ENCODE measurements at regions of chr5 and their contacts with region 1.

Region 1: GRCh38 chr5:42423285-42424165 is at the start of gene GHR:
- DNase-seq: peak; percentile 84 to 93 (median 92)
- ATAC-seq: peak; percentile 96 to 97
- H3K4me3 ChIP-seq: peak within 1 kb of the TSS; percentile 91
- H3K27ac ChIP-seq: peak within 1 kb of the TSS; percentile 69
- H3K4me1 ChIP-seq: no peaks in the 10 kb centered on the region
- H3K27me3 ChIP-seq: no peaks in the 10 kb centered on the region
- total RNA-seq, gene GHR: 14.0 to 21.8 (median 18.0) TPM

Region 2: DNA sequence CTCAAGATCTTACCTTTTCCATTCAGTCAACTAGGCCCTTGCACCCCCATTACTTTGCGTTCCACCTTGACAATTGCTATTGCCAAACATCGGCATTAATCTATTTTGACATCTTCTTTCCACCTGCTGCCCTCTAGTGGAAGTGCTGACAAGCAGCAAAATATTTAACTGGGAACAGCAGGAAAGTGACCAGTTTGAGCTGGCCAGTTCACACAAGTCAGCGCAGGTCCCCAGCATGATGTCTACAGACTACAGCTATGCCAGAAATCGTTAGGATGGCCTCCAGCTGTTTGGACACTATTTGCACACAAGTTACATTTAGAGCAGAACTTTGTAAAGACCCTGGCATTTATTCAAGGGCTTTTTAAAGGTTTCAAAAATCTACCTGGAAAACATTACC is 159.8 kb after region 1 on chr5:
- intact Hi-C with region 1: loop called in 3 of 4 experiments (anchors 5 to 10 kb)
- DNase-seq: peak; percentile 54 to 68 (median 55)
- ATAC-seq: peak; percentile 57 to 61
- H3K4me3 ChIP-seq: no peak overlapping the region
- H3K27ac ChIP-seq: no peak overlapping the region
- H3K4me1 ChIP-seq: peaks cover 3% of the 10 kb centered on the region
- H3K27me3 ChIP-seq: no peaks in the 10 kb centered on the region

Region 3: GRCh38 chr5:42656651-42657015 is 233.1 kb after region 1 on chr5:
- intact Hi-C with region 1: loop called in 1 of 4 experiments (anchors 10 kb)
- DNase-seq: no peak
- ATAC-seq: peak; percentile 35 to 64
- H3K4me3 ChIP-seq: peak overlapping the region; percentile 35
- H3K27ac ChIP-seq: no peak overlapping the region
- H3K4me1 ChIP-seq: peaks cover 3% of the 10 kb centered on the region
- H3K27me3 ChIP-seq: no peaks in the 10 kb centered on the region